ENCODE measurements at regions of chr17 and their contacts with region 1.

Region 1: GRCh38 chr17:19766422-19767270 is 18.5 kb upstream of the ALDH3A1 start:
- DNase-seq: peak; percentile 74 to 80
- H3K4me3 ChIP-seq: no peak overlapping the region
- H3K27ac ChIP-seq: no peak overlapping the region
- H3K4me1 ChIP-seq: peaks cover 0 to 10% of the 10 kb centered on the region in 2 donors
- H3K27me3 ChIP-seq: no peaks in the 10 kb centered on the region
- CTCF ChIP-seq: peak; percentile 79 to 98 (median 95)
- POLR2A ChIP-seq: no peak

Region 2: DNA sequence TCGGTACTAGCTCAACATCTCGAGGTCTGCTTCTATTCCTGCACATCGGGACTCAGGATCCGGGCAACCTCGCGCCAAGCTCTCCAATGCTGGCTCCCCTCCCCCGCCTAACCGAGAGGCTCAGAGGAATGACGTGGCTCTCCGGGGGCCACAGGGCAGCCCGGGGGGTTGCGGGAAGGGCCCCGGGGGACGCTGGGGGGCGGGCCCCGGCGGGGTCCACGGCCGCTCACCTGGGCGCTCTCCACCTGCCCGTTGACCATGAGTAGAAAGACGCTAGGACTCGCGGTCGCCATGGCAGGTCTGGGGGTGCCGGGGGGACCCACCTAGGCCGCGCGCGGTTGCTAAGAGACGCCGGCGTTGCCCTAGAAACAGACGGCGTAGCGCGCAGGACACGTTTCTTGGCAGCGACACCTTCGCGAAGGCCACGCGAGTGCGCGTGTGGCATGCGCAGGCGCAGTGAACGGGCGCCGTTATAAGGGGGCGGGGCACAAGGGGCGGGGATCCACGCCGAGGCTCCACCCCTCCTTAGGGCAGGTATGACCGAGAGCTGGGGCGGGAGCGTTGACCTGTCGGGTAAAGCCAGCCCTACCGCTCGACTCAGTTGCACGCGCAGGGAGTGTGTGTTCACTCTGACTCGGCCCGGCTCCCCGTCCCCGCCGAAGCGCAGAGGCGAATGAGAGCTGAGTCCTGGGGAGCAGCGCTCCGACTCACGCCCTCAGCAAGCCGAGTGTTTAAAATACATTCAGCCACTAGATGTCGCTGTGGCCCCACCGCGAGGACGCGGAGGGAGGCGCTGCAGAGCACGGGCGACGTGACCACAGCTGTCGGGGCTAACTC is 404.2 kb before region 1 on chr17 and contains the start of gene B9D1:
- intact Hi-C with region 1: loop called (anchors 10 kb)
- DNase-seq: peak; percentile 93 to 94
- H3K4me3 ChIP-seq: peak within 1 kb of the TSS; percentile 43 to 66 (median 63)
- H3K27ac ChIP-seq: peak within 1 kb of the TSS; percentile 75 to 93 (median 92)
- H3K4me1 ChIP-seq: peaks cover 12 to 13% of the 10 kb centered on the region in 2 donors
- H3K27me3 ChIP-seq: no peaks in the 10 kb centered on the region
- CTCF ChIP-seq: peak in 5 of 6 experiments; percentile 98 to 100 (median 99)
- POLR2A ChIP-seq: peak in 1 of 2 donors; percentile 70
- total RNA-seq, gene B9D1: 45.0 to 104 (median 90.3) TPM

Region 3: GRCh38 chr17:19447085-19447583 is 319.5 kb before region 1 on chr17:
- intact Hi-C with region 1: loop called (anchors 5 kb)
- DNase-seq: peak; percentile 69
- H3K4me3 ChIP-seq: no peak overlapping the region
- H3K27ac ChIP-seq: peak overlapping the region in 2 of 3 donors; percentile 21 to 22
- H3K4me1 ChIP-seq: no peaks in the 10 kb centered on the region
- H3K27me3 ChIP-seq: no peaks in the 10 kb centered on the region
- CTCF ChIP-seq: peak; percentile 80 to 96 (median 92)
- POLR2A ChIP-seq: no peak

Region 4: GRCh38 chr17:19513897-19514488 is 252.7 kb before region 1 on chr17:
- intact Hi-C with region 1: loop called (anchors 2 kb)
- DNase-seq: peak; percentile 68 to 74
- H3K4me3 ChIP-seq: no peak overlapping the region
- H3K27ac ChIP-seq: no peak overlapping the region
- H3K4me1 ChIP-seq: no peaks in the 10 kb centered on the region
- H3K27me3 ChIP-seq: no peaks in the 10 kb centered on the region
- CTCF ChIP-seq: peak; percentile 68 to 94 (median 88)
- POLR2A ChIP-seq: no peak